Cardiac septum (tissue), 1 donor: ENCODE measurements at regions of chr10 and their contacts with region 1.

Region 1: DNA sequence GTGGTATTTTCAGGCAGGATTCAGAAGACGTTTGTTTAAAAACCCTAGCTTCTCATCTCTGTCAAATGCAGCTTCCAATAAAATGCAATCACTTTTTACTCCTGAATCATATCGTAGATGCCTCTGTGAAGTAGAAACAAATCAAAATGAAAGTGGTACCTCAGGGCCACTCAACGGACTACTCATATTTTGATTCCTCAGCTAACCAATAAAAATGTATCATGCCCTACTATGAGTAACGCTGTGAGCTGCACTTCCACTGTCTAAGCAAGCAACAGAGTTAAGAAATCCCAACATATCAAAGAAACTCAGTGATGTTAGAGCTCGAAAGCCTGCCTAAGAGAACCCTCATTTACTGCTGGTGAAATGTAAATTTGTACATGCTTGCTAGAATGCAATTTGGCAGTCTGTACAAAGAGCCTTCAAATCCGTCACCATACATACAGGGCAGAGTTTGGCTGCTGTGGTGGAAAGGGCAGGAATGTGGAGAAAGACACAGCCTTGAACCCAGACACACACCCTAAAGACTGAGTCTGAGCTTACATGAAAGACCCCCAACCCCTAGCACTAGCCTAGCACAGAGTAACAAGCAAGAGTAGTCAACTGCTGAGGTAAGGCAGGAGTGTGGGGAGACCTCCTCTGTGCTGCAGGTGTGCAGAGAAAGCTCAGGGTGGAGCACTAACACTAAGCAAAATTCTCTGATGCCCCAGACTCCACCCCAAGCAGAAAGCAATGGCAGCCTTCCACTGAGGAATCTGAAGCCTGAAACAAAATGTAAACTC is 151.5 kb downstream of the ANK3 start:
- DNase-seq: no peak

Region 2: DNA sequence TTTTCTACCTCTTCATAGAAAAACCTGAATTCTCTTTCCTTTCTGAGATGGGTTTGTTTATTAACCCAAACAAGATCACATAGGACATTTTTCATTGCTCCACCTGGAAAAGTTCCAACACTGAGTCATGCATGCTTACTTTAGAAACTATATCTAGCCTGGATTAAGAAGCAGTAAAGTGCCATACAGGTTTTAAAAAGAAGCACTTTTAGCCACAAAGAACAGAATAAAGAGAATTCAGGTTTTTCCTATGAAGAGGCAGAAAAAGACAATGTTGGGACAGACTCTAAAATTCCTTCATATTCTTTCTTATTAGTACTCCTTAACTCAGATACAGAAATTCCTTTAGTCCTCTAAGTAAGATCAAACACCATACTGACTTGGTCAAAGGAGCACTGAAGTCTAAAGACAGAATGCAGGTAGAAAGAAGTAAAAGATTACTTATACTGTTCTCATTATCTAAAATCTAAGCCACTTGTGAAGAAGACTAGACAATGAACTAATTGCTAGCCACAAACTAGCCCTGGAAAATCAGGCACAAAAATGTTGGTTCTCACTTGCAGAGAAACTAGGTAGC is 89.8 kb before region 1 on chr10:
- intact Hi-C with region 1: no loop called
- DNase-seq: no peak

Region 3: GRCh38 chr10:60186315-60187071 is 51.7 kb before region 1 on chr10:
- intact Hi-C with region 1: no loop called
- DNase-seq: no peak

Region 4: DNA sequence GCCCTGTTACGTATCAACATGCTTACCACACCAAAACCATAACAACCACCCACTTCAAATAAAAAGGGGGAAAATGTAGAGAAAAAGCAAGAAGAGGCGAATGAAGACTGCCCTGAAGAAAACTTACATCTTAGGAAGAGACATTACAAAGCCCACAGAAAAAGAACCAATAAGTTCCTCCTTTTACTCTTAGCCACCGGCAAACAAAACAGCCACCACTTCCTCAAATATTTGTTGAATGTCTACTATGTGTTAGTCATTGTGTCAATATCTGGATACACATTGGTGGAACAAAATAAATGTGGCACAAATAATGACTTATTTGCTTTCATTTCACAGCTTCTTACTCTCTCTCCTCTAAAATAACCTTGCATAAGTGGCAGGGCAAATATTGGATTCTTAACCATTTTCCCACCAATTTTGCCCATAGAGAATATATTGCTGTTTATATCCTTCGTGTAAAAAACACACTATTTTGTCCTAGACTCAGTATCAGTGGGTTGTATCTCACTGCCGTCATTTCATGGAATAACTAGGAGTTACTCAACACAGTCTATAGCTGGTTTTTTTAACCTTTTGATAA is 44.7 kb after region 1 on chr10:
- intact Hi-C with region 1: loop called (anchors 5 kb)
- DNase-seq: no peak

Region 5: GRCh38 chr10:60299961-60300883 is 62.1 kb after region 1 on chr10:
- intact Hi-C with region 1: loop called (anchors 5 kb)
- DNase-seq: no peak

Region 6: DNA sequence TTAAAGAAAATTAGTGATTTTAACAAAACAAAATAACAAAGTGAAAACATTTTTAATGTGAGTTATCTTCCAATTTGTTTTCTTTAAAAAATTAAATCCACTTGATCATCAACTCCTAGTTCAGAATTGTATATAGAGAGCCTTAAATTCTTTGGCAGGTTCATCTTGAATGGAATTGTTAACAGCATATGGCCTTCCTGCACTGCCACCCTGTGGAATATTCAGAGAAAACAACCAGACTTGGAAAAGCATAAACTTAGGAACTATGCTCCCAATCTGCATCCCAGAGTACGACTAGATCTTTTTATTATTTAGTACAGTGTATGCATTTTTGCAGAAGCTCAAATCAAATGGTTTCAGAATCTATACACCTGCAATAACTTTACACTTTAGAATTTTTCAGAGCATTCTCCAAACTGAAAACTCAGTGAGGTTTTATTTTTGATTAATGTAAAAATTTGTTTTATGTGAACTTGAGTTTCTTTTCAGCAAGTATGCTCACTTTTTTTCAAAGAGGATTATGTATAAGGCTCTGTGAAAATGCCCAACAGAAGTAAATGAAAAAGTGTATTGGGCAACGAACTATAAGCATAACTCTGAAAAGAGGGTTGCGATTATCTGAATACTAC is 196.4 kb after region 1 on chr10:
- intact Hi-C with region 1: loop called (anchors 2 kb)
- DNase-seq: no peak